Activated B cell treated with CpG ODN at 0.5 μM for 24 hours (primary cell): ENCODE measurements at regions of chr22 and their contacts with region 1.

Region 1: DNA sequence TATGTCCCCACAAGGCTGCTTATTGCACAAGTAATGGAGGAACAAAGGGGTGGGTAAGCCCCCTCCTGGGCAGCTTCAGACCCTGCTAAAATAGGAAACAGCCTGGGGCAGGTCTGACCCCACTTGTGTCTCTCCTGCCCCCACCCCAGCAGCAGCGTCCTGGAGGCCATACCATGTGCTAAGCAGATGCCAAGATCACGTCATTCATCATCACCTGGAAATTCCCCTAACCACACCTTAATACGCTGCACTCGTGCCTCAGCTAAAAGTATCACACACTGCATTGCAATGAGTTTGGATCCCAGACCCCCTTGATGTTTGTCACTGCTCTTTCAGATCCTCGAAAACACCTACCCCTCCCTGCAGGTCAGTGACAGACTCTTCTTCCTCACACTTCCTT is 27.8 kb upstream of the GGTLC2 start:
- DNase-seq: no peak
- ATAC-seq: peak; percentile 88
- H3K4me3 Mint-ChIP-seq: no peak overlapping the region
- H3K27ac Mint-ChIP-seq: peak overlapping the region; percentile 43
- H3K4me1 Mint-ChIP-seq: peaks cover 16% of the 10 kb centered on the region
- H3K27me3 Mint-ChIP-seq: no peaks in the 10 kb centered on the region
- CTCF ChIP-seq: no peak

Region 2: DNA sequence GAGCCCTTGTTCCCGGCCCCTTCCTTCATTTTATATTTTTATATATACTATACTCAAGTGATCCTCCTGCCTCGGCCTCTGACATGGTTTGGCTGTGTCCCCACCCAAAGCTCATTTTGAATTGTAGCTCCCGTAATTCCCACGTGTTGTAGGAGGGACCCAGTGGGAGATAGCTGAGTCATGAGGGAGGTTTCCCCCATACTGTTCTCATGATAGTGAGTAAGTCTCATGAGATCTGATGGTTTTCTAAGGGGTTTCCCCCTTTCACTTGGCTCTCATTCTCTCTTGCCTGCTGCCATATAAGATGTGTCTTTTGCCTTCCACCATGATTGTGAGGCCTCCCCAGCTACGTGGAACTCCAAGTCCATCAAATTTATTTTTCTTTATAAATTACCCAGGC is 89.3 kb before region 1 on chr22:
- CTCF ChIA-PET with region 1: no interaction called
- POLR2A ChIA-PET with region 1: no interaction called
- intact Hi-C with region 1: no loop called
- DNase-seq: no peak
- ATAC-seq: no peak
- H3K4me3 Mint-ChIP-seq: no peak overlapping the region
- H3K27ac Mint-ChIP-seq: no peak overlapping the region
- H3K4me1 Mint-ChIP-seq: peaks cover 10% of the 10 kb centered on the region
- H3K27me3 Mint-ChIP-seq: peaks cover 5% of the 10 kb centered on the region
- CTCF ChIP-seq: no peak

Region 3: DNA sequence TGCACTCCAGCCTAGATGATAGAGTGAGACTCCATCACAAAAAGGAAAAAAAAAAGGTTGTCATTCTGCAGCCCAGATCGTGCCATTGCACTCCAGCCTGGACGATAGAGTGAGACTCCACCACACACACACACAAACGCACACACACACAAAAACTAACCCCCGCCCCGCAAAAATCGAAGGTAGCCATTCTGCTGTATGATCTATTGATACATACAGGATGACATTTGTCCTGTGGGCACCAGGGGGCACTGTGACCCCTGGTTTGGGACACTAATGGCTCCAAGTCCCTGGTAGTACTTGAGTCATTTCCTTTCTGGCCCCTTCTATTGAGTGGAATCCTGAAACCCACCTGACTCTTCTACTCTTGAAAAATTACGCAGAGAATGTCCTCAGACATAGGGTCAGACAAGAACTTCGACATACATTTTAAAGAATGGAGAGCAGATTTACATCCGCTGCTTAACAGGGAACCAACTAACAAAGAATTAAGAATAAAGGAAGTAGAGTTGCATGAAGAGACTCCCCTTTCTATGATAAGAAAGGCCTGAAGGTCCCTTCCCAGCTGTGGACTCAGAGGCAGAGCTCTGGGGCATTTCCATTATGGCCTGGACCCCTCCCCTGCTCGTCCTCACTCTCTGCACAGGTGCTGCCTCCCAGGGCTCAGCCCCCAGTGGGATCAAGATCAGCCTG is 22.5 kb before region 1 on chr22:
- CTCF ChIA-PET with region 1: no interaction called
- POLR2A ChIA-PET with region 1: no interaction called
- intact Hi-C with region 1: loop called (anchors 1 kb)
- DNase-seq: peak; percentile 53
- ATAC-seq: peak; percentile 90
- H3K4me3 Mint-ChIP-seq: no peak overlapping the region
- H3K27ac Mint-ChIP-seq: peak overlapping the region; percentile 46
- H3K4me1 Mint-ChIP-seq: peaks cover 27% of the 10 kb centered on the region
- H3K27me3 Mint-ChIP-seq: no peaks in the 10 kb centered on the region
- CTCF ChIP-seq: no peak

Region 4: DNA sequence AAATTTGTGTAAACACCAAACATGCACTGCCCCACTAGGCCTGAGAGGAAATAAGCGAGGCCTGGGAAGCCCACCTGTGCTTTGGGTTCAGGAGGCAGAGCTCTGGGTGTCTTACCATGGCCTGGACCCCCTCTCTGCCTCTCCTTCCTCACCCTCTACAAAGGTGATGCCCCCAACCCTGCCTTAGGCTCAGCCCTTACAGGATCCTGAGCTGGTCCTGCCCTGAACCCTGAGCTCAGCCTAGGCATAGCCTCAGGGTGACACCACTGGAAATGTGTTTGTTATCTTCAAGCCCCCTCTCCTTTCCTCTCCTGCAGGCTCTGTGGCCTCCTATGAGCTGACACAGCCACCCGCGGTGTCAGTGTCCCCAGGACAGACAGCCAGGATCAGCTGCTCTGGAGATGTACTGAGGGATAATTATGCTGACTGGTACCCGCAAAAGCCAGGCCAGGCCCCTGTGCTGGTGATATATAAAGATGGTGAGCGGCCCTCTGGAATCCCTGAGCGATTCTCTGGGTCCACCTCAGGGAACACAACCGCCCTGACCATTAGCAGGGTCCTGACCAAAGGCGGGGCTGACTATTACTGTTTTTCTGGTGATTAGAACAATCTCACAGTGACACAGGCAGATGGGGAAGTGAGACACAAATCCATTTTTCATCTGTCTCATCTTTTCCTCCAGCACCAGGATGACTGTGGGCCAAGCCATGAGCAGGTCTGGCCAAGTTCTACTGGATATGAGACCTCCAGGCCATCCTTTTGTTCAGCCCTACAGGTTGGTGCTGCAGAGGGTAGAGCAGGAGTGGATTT is 145.5 kb after region 1 on chr22:
- CTCF ChIA-PET with region 1: no interaction called
- POLR2A ChIA-PET with region 1: no interaction called
- intact Hi-C with region 1: no loop called
- DNase-seq: no peak
- ATAC-seq: no peak
- H3K4me3 Mint-ChIP-seq: no peak overlapping the region
- H3K27ac Mint-ChIP-seq: no peak overlapping the region
- H3K4me1 Mint-ChIP-seq: peaks cover 1% of the 10 kb centered on the region
- H3K27me3 Mint-ChIP-seq: peaks cover under 1% of the 10 kb centered on the region
- CTCF ChIP-seq: no peak

Region 5: GRCh38 chr22:22823131-22823810 is 206.6 kb after region 1 on chr22:
- CTCF ChIA-PET with region 1: no interaction called
- POLR2A ChIA-PET with region 1: no interaction called
- intact Hi-C with region 1: no loop called
- DNase-seq: no peak
- ATAC-seq: peak; percentile 54
- H3K4me3 Mint-ChIP-seq: peak overlapping the region; percentile 19
- H3K27ac Mint-ChIP-seq: peak overlapping the region; percentile 46
- H3K4me1 Mint-ChIP-seq: peaks cover 59% of the 10 kb centered on the region
- H3K27me3 Mint-ChIP-seq: peaks cover 2% of the 10 kb centered on the region
- CTCF ChIP-seq: no peak

Region 6: GRCh38 chr22:23431337-23432072 is 814.9 kb after region 1 on chr22:
- CTCF ChIA-PET with region 1: no interaction called
- POLR2A ChIA-PET with region 1: no interaction called
- intact Hi-C with region 1: no loop called
- DNase-seq: no peak
- ATAC-seq: no peak
- H3K4me3 Mint-ChIP-seq: no peak overlapping the region
- H3K27ac Mint-ChIP-seq: no peak overlapping the region
- H3K4me1 Mint-ChIP-seq: peaks cover 14% of the 10 kb centered on the region
- H3K27me3 Mint-ChIP-seq: peaks cover 2% of the 10 kb centered on the region
- CTCF ChIP-seq: no peak